Activated T-helper 1 cell treated with anti-CD3 and anti-CD28 coated beads, Interleukin-12 subunit alpha, Interleukin-12 subunit beta, Interleukin-2, Interleukin-4 antibody, amounts not matched to agents 30 ng/mL and 10 ng/mL and 1 ng/mL, durations not matched to agents 14 hours and 24 hours and 36 hours (primary cell): ENCODE measurements at regions of chr11 and their contacts with region 1.

Region 1: DNA sequence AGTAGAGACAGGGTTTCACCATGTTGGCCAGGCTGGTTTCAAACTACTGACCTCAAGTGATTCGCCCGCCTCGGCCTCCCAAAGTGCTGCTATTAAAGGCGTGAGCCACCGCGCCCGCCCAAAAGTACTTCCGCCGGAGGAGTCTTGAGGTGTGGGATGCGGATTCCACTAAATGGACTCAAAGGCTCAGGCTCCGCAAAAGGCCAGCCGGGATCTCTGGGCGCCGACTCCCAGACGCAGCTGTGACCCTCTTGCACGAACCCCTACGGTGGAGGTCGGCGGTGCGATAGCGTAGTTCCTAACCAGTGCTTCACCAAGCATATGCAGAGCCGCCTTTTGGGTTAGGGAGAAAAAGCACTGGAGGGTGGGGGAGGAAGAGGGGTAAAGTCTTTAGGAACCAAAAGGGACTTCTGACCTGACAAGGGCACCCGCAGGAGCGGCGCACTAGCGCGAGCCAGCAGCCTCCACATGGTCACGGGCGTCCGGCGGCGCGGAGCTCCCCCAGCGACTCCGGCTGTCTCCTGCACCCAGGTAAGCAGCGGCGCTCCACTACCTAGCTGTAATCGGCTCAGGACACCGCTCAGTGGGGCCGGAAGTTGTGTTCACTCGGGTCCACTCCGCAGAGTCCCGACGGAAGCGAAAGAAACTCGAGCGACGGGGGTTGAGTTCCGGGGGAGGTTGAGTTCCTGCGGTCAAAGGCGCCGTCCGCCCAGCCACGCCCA is at the start of gene MRPL16:
- DNase-seq: peak; percentile 82
- H3K4me3 Mint-ChIP-seq: peak within 1 kb of the TSS; percentile 96
- H3K27ac Mint-ChIP-seq: peak within 1 kb of the TSS; percentile 91
- H3K4me1 Mint-ChIP-seq: peaks cover 28% of the 10 kb centered on the region
- H3K27me3 Mint-ChIP-seq: no peaks in the 10 kb centered on the region
- total RNA-seq, gene MRPL16: 88.3 and 93.9 TPM in 2 replicates

Region 2: GRCh38 chr11:59719556-59719955 is 90.8 kb before region 1 on chr11:
- intact Hi-C with region 1: no loop called
- DNase-seq: no peak
- H3K4me3 Mint-ChIP-seq: no peak overlapping the region
- H3K27ac Mint-ChIP-seq: no peak overlapping the region
- H3K4me1 Mint-ChIP-seq: no peaks in the 10 kb centered on the region
- H3K27me3 Mint-ChIP-seq: peaks cover 23% of the 10 kb centered on the region

Region 3: GRCh38 chr11:59776210-59777066 is 33.9 kb before region 1 on chr11:
- intact Hi-C with region 1: loop called (anchors 2 kb)
- DNase-seq: no peak
- H3K4me3 Mint-ChIP-seq: peak overlapping the region; percentile 23
- H3K27ac Mint-ChIP-seq: peak overlapping the region; percentile 50
- H3K4me1 Mint-ChIP-seq: peaks cover 68% of the 10 kb centered on the region
- H3K27me3 Mint-ChIP-seq: no peaks in the 10 kb centered on the region

Region 4: DNA sequence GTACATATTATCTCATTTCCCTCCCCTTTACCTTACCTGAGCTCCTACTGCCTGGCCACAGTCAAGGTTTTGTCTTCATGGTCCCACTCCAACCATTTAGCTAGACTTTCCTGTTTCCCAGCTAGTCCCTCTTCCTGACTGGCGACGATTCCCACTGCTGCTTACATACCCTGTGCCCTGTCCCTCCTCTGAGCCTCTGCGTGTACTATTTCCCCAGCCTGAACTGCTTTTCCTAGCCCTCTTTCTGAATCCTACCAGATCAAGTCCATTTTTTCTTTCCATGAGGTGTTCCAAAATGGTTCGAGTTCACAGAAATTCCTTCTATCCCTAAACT is 23.1 kb before region 1 on chr11:
- intact Hi-C with region 1: no loop called
- DNase-seq: no peak
- H3K4me3 Mint-ChIP-seq: no peak overlapping the region
- H3K27ac Mint-ChIP-seq: no peak overlapping the region
- H3K4me1 Mint-ChIP-seq: peaks cover 46% of the 10 kb centered on the region
- H3K27me3 Mint-ChIP-seq: no peaks in the 10 kb centered on the region

Region 5: GRCh38 chr11:59857444-59858434 is 47.4 kb after region 1 on chr11:
- intact Hi-C with region 1: loop called (anchors 1 kb)
- DNase-seq: no peak
- H3K4me3 Mint-ChIP-seq: no peak overlapping the region
- H3K27ac Mint-ChIP-seq: peak overlapping the region; percentile 80
- H3K4me1 Mint-ChIP-seq: peaks cover 29% of the 10 kb centered on the region
- H3K27me3 Mint-ChIP-seq: peaks cover 22% of the 10 kb centered on the region